Mammary epithelial cell (primary cell): ENCODE measurements at regions of chr16 and their contacts with region 1.

Region 1: GRCh38 chr16:58629572-58630104 is at the start of gene CNOT1:
- DNase-seq: peak; percentile 100
- H3K4me3 ChIP-seq: peak within 1 kb of the TSS; percentile 81 to 98 (median 94)
- H3K27ac ChIP-seq: peak within 1 kb of the TSS; percentile 95
- H3K4me1 ChIP-seq: peaks cover 3% of the 10 kb centered on the region
- H3K27me3 ChIP-seq: no peaks in the 10 kb centered on the region
- CTCF ChIP-seq: no peak
- total RNA-seq, gene CNOT1: 159 to 191 TPM

Region 2: DNA sequence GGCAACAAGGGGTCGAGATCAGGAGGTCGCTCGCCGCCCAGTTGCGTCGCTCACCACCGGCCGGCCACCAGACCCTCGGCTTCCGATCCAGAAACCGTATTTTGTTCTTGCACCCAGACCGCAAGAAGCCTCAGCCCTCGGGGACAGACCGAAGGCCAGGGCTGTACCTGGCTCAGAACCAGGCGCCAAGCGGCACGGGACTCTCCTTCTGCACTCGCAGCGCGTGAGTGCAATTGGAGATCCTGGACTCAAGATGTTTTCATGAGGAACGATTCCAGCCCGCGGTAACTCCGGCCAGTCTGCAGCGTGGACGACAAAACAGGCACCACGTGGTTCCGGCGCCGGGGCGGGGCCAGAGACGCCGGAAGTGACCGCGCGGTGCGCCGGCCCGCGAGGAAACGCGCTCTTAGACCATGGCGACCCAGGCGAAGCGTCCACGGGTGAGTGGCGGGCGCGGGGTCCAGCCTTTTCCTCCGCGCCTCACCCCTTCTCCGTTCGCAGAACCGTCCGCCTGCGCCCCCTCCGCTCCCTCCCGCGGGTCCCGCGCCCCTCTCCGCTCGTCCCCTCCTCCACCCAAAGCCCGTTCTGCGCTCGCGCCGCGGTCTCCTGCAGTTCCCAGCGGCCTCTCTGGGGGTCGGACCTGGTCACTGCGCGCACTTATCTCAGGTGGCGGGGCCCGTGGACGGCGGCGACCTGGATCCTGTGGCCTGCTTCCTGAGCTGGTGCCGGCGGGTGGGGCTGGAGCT is 114.3 kb before region 1 on chr16 and contains the start of gene SETD6:
- CTCF ChIA-PET with region 1: no interaction called
- dilution Hi-C with region 1: no loop called
- in situ Hi-C with region 1: no loop called
- intact Hi-C with region 1: loop called (anchors 2 kb)
- DNase-seq: peak; percentile 77
- H3K4me3 ChIP-seq: peak within 1 kb of the TSS; percentile 49 to 84 (median 65)
- H3K27ac ChIP-seq: peak within 1 kb of the TSS; percentile 2
- H3K4me1 ChIP-seq: peaks cover 17% of the 10 kb centered on the region
- H3K27me3 ChIP-seq: no peaks in the 10 kb centered on the region
- CTCF ChIP-seq: peak in 1 of 2 donors; percentile 35
- total RNA-seq, gene SETD6: 12.5 to 14.4 TPM

Region 3: GRCh38 chr16:58537124-58537906 is 92.3 kb before region 1 on chr16:
- CTCF ChIA-PET with region 1: no interaction called
- dilution Hi-C with region 1: loop called (anchors 5 kb)
- in situ Hi-C with region 1: no loop called
- intact Hi-C with region 1: no loop called
- DNase-seq: no peak
- H3K4me3 ChIP-seq: no peak overlapping the region
- H3K27ac ChIP-seq: no peak overlapping the region
- H3K4me1 ChIP-seq: no peaks in the 10 kb centered on the region
- H3K27me3 ChIP-seq: no peaks in the 10 kb centered on the region
- CTCF ChIP-seq: no peak

Region 4: DNA sequence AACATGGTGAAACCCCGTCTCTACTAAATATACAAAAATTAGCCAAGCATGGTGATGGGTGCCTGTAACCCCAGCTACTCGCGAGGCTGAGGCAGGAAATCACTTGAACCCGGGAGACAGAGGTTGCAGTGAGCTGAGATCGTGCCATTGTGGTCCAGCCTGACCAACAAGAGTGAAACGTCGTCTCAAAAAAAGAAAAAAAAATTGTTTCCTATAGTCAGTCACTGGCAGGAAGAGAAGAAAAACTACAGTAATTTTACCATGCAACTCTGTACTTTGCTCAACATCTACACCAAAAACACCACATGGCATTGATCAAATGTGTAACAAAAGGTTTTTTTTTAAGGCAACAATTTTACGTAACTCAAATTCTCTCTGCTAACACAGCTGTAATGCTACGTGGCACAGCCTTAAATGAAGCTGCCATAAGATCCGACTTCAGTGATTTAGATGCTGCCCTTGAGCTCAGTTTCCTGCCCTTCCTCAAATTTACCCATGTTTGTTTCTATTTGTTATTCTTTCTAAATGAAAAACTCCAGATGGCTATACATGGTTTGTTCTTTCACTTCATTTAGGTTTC is 40.2 kb before region 1 on chr16:
- CTCF ChIA-PET with region 1: no interaction called
- dilution Hi-C with region 1: loop called (anchors 5 kb)
- in situ Hi-C with region 1: no loop called
- intact Hi-C with region 1: no loop called
- DNase-seq: no peak
- H3K4me3 ChIP-seq: no peak overlapping the region
- H3K27ac ChIP-seq: no peak overlapping the region
- H3K4me1 ChIP-seq: no peaks in the 10 kb centered on the region
- H3K27me3 ChIP-seq: no peaks in the 10 kb centered on the region
- CTCF ChIP-seq: no peak

Region 5: GRCh38 chr16:58661199-58661830 is 31.7 kb after region 1 on chr16:
- CTCF ChIA-PET with region 1: no interaction called
- dilution Hi-C with region 1: no loop called
- in situ Hi-C with region 1: no loop called
- intact Hi-C with region 1: loop called (anchors 2 kb)
- DNase-seq: peak; percentile 81
- H3K4me3 ChIP-seq: no peak overlapping the region
- H3K27ac ChIP-seq: no peak overlapping the region
- H3K4me1 ChIP-seq: no peaks in the 10 kb centered on the region
- H3K27me3 ChIP-seq: no peaks in the 10 kb centered on the region
- CTCF ChIP-seq: peak; percentile 70 to 76

Region 6: DNA sequence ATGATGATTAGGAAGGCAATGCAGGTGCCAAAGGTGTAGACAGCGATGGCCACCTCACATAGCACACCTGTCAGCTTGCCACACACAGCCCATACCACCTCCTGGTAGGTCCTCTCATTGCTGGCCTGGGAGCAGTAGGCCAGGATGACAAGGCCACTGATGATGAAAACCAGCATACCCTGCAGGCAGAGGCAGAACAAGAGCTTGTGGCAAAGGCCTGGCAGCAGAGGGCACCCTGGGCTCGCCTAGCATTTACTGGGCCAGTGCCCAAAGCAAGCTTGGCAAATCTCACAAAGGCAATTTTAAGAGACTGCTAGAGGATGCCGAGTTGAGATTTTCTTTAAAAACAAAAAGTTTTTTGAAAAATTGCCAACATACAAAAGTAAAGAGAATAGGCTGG is 49.1 kb after region 1 on chr16:
- CTCF ChIA-PET with region 1: no interaction called
- dilution Hi-C with region 1: loop called (anchors 10 kb)
- in situ Hi-C with region 1: no loop called
- intact Hi-C with region 1: no loop called
- DNase-seq: peak; percentile 43
- H3K4me3 ChIP-seq: no peak overlapping the region
- H3K27ac ChIP-seq: no peak overlapping the region
- H3K4me1 ChIP-seq: no peaks in the 10 kb centered on the region
- H3K27me3 ChIP-seq: no peaks in the 10 kb centered on the region
- CTCF ChIP-seq: peak; percentile 29 to 61